Activated T-helper 2 cell treated with anti-CD3 and anti-CD28 coated beads, Interferon-gamma antibody, Interleukin-2, Interleukin-4, amounts not matched to agents 10 μg/mL and 5 μg/mL and 100 μg/mL, durations not matched to agents 14 hours and 24 hours and 36 hours (primary cell): ENCODE measurements at regions of chr6 and their contacts with region 1.

Region 1: DNA sequence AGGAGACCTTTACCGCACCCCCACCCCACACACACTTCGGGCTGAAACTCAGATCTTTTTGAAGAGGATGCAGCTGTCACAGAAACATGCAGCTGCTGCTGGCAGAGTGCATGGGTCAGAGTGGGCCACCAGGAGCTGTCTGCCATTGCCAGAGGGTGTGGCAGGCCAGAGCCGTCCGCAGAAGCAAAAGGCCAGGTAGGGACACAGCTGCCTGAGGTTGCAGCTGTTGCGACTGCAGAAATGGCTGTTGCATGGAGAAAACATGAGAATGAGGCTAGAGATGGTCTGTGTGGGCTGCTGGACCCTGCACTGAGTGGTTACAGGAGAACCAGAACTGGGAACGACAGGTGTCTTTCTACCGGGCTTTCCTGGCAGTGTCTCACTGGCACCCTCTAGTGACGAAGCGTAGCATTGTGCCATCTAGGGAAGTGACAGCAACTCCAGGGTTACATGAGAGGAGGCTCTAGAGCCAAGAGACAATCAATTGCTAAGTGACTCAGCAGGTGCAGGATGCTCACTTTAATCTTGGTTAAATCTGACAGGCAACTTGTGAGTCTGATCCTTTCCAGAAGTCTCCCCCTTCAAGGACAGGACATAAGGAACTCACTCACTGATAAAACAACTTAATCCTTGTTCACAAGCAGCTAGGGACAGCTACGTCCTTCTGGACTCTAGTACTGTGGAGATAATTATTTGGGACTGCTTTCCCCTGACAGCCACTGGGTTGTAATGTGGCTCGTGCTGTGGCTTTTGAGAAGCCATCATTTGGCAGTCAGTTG is 29.1 kb upstream of the SERPINB9 start:
- DNase-seq: peak; percentile 78
- H3K4me3 Mint-ChIP-seq: no peak overlapping the region
- H3K27ac Mint-ChIP-seq: peak overlapping the region; percentile 54
- H3K4me1 Mint-ChIP-seq: peaks cover 23% of the 10 kb centered on the region
- H3K27me3 Mint-ChIP-seq: no peaks in the 10 kb centered on the region

Region 2: DNA sequence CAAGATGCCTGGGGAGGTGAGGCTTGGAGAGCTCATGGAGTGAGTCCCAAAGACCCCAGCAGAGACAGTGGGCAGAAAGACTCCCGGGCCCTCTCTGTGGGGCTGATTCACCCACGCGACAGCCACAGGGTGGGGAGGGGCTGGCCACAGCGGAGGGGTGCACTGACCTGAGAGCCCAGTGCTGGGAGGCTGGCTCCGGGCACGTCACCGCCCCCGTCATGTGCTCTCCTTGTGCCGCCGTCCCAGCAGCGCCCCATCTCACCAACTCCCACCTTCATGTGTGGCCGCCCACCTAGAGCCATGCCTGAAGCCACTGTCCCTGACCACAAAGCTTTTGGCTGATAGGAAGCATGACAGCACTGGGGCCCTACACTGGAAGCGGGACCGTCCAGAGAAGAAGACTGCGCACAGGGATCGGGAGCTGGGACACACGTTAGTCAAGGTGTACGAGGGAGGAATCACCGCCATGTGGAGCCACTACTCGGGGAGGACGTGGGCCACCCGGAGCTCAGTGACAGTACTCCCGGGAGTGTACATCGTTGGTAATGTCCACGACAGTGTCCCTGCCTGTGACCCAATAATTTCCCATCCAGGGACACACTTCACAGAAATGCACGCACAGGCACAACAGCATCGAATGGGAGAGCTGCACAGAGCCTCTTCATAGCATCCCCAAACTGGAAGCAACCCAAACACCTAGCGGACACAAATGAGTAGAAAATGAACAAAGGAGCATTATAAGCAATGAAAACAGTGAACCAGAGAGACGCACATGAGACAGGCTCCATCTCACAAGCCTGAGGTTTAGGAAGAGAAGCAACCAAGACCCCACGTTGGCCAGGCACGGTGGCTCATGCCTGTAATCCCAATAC is 1350.8 kb before region 1 on chr6:
- intact Hi-C with region 1: no loop called
- DNase-seq: no peak
- H3K4me3 Mint-ChIP-seq: no peak overlapping the region
- H3K27ac Mint-ChIP-seq: no peak overlapping the region
- H3K4me1 Mint-ChIP-seq: no peaks in the 10 kb centered on the region
- H3K27me3 Mint-ChIP-seq: peaks cover 2% of the 10 kb centered on the region

Region 3: DNA sequence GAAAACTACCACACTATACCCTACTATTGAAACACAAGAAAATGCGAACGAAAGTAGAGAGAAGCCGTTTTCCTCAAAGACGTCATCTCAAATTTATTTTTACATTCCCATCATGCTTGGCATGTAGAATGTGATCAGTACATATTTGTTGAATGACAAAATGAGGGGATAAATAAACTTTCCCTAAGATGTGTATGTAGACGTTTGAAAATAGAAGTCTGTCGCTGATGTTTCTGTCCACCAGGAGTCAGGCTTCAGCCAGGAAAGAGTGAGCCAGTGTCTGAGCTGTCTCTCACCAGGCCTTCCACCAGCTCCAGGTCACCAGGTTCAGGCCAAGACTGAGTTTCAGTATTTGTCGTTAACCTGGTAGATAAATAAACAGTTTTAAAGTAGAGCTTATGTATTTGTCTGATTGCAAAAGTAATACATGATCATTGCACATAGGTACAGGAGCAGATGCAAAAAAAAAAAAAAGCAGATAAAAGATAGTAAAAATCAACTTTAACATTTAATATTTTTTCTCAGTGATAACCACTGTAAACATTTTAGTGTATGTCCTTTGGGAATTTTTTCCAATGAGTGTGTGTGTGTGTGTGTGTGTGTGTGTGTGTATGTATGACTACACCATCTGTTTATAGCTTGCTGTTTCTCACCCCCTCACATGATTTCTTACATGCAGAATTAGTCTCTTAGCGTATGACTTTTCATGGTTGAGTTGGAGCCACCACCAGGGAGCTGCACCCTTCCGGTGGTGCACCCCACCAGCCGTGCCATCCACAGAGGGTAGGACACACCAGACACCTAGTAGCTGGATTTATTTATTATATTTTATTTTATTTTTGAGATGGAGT is 140.8 kb before region 1 on chr6:
- intact Hi-C with region 1: loop called (anchors 1 kb)
- DNase-seq: peak; percentile 55
- H3K4me3 Mint-ChIP-seq: peak overlapping the region; percentile 41
- H3K27ac Mint-ChIP-seq: peak overlapping the region; percentile 87
- H3K4me1 Mint-ChIP-seq: peaks cover 44% of the 10 kb centered on the region
- H3K27me3 Mint-ChIP-seq: no peaks in the 10 kb centered on the region

Region 4: GRCh38 chr6:3194535-3195419 is 262.6 kb after region 1 on chr6:
- intact Hi-C with region 1: no loop called
- DNase-seq: no peak
- H3K4me3 Mint-ChIP-seq: no peak overlapping the region
- H3K27ac Mint-ChIP-seq: no peak overlapping the region
- H3K4me1 Mint-ChIP-seq: no peaks in the 10 kb centered on the region
- H3K27me3 Mint-ChIP-seq: peaks cover 10% of the 10 kb centered on the region